ENCODE measurements at regions of chr20 and their contacts with region 1.

Region 1: GRCh38 chr20:6651016-6651415 is 116.5 kb upstream of the BMP2 start:
- DNase-seq: no peak
- ATAC-seq: peak; percentile 19
- H3K4me3 ChIP-seq: no peak overlapping the region
- H3K27ac ChIP-seq: no peak overlapping the region
- H3K4me1 ChIP-seq: no peaks in the 10 kb centered on the region
- H3K27me3 ChIP-seq: no peaks in the 10 kb centered on the region
- CTCF ChIP-seq: no peak
- EP300 ChIP-seq: no peak
- POLR2A ChIP-seq: no peak
- RAD21 ChIP-seq: no peak

Region 2: GRCh38 chr20:5621305-5621704 is 1029.7 kb before region 1 on chr20:
- CTCF ChIA-PET with region 1: no interaction called
- POLR2A ChIA-PET with region 1: no interaction called
- RAD21 ChIA-PET with region 1: no interaction called
- SMC1A ChIA-PET with region 1: no interaction called
- in situ Hi-C with region 1: no loop called
- intact Hi-C with region 1: no loop called
- DNase-seq: no peak
- ATAC-seq: no peak
- H3K4me3 ChIP-seq: no peak overlapping the region
- H3K27ac ChIP-seq: no peak overlapping the region
- H3K4me1 ChIP-seq: peaks cover 3% of the 10 kb centered on the region
- H3K27me3 ChIP-seq: no peaks in the 10 kb centered on the region
- CTCF ChIP-seq: no peak
- EP300 ChIP-seq: no peak
- POLR2A ChIP-seq: no peak
- RAD21 ChIP-seq: no peak

Region 3: GRCh38 chr20:6311841-6312655 is 339.0 kb before region 1 on chr20:
- CTCF ChIA-PET with region 1: no interaction called
- POLR2A ChIA-PET with region 1: no interaction called
- RAD21 ChIA-PET with region 1: no interaction called
- SMC1A ChIA-PET with region 1: no interaction called
- in situ Hi-C with region 1: no loop called
- intact Hi-C with region 1: no loop called
- DNase-seq: no peak
- ATAC-seq: no peak
- H3K4me3 ChIP-seq: no peak overlapping the region
- H3K27ac ChIP-seq: no peak overlapping the region
- H3K4me1 ChIP-seq: no peaks in the 10 kb centered on the region
- H3K27me3 ChIP-seq: no peaks in the 10 kb centered on the region
- CTCF ChIP-seq: no peak
- EP300 ChIP-seq: no peak
- POLR2A ChIP-seq: no peak
- RAD21 ChIP-seq: no peak

Region 4: DNA sequence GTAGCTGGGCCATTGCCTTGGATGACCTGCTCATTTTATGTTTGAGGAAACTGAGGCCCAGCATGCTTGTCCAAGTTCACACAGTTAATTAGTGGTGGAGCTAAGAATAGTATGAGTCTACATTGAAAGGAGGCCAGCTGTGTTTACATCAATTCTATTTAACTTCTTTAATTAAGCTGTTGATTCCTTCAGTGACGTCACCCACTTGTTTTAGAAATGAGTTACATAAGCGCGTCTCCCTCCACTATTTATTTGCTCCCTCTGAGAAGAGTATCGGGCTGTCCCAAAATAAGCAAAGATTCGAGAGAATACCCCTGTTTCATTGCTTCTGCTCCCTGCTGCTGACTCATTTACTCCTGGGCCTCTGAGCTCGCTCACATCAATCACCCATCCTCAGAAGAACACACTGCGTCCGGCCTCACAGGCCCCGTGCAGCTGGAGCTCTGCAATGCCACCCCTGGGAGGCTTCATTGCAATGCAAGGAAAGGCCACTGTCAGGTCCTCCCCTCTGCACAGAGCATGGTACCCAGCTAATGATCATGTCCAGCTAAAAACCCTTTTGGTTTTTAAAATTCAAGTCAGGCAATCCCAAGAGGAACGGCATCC is 41.7 kb after region 1 on chr20:
- CTCF ChIA-PET with region 1: interaction called, 4 read pairs
- POLR2A ChIA-PET with region 1: no interaction called
- RAD21 ChIA-PET with region 1: interaction called, 3 read pairs
- SMC1A ChIA-PET with region 1: interaction called, 11 read pairs
- in situ Hi-C with region 1: no loop called
- intact Hi-C with region 1: no loop called
- DNase-seq: no peak
- ATAC-seq: peak; percentile 91
- H3K4me3 ChIP-seq: no peak overlapping the region
- H3K27ac ChIP-seq: no peak overlapping the region
- H3K4me1 ChIP-seq: no peaks in the 10 kb centered on the region
- H3K27me3 ChIP-seq: no peaks in the 10 kb centered on the region
- CTCF ChIP-seq: no peak; a peak in 1 of 6 replicates
- EP300 ChIP-seq: no peak
- POLR2A ChIP-seq: no peak
- RAD21 ChIP-seq: no peak